ENCODE measurements at regions of chr10 and their contacts with region 1.

Region 1: DNA sequence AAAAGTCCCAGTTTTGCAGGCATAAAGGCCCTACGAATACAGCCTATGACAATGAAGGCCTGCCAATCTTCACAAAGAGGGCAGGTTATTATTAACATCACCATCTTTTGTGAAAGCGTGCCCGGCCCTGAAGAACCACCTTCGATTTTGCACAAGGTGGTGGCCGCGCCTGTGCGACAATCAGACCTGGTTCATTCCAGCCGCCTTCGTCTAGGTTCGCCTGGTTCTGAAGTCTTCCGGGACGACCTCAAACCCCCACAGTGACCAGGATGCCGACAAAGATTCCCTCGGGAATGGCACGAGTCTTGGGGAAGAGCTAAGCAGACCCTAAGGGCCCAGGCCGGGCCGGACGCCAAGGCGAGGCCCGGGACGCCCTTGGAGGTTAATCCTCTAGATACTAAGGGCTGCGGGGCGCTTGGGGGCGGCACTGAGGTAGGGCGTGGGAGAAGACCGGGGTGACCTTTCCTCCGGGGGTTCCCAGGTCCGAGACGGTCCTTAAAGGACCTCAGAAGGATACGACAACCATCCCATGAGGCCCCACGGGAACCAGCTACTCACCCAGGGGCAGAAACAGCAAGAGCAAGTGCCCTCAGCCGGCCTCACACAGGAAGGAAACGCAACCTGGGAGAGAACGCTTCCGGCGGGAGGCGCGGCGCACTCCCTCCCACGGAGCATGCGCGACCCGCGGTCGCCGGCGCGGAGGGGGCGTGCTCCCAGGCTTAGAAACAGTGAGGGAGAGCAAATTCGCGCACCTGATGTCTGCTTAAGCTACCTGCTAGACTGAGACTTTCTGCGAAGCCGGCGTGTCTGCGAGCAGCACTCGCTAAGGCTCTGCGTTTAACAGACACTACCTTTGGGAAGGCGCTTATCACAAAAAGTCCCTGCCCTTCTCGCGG is at the start of gene ATAD1:
- DNase-seq: peak; percentile 93
- H3K4me3 Mint-ChIP-seq: peak within 1 kb of the TSS; percentile 97
- H3K27ac Mint-ChIP-seq: peak within 1 kb of the TSS; percentile 98
- H3K4me1 Mint-ChIP-seq: peaks cover 29% of the 10 kb centered on the region
- H3K27me3 Mint-ChIP-seq: no peaks in the 10 kb centered on the region
- total RNA-seq, gene ATAD1: 39.4 to 42.8 TPM

Region 2: DNA sequence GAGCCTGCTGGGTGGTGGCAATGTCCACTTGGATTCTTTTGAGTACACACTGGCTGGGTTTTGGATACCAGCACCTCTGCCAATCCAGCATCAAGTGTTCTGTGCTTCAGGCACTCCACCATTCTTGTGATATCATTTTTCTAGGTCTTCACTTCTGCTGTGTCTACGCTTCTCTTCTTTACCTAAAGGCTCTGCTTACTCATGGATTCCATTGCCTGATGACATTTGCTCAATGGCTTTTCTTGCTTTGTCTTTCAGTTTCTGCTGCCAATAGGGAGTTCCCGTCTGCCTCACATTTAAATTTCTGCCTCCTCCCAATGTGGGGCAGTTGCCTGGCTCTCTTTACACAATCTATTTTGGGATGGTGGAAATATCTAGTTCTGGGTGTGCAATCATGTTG is 170.9 kb before region 1 on chr10:
- CTCF ChIA-PET with region 1: no interaction called
- POLR2A ChIA-PET with region 1: no interaction called
- intact Hi-C with region 1: no loop called
- DNase-seq: no peak
- H3K4me3 Mint-ChIP-seq: no peak overlapping the region
- H3K27ac Mint-ChIP-seq: no peak overlapping the region
- H3K4me1 Mint-ChIP-seq: peaks cover 15% of the 10 kb centered on the region
- H3K27me3 Mint-ChIP-seq: no peaks in the 10 kb centered on the region

Region 3: GRCh38 chr10:87761892-87762291 is 56.0 kb before region 1 on chr10:
- CTCF ChIA-PET with region 1: no interaction called
- POLR2A ChIA-PET with region 1: no interaction called
- intact Hi-C with region 1: loop called (anchors 1 kb)
- DNase-seq: peak; percentile 75
- H3K4me3 Mint-ChIP-seq: no peak overlapping the region
- H3K27ac Mint-ChIP-seq: peak overlapping the region; percentile 72
- H3K4me1 Mint-ChIP-seq: peaks cover 31% of the 10 kb centered on the region
- H3K27me3 Mint-ChIP-seq: no peaks in the 10 kb centered on the region

Region 4: GRCh38 chr10:88064608-88065382 is 246.9 kb after region 1 on chr10:
- CTCF ChIA-PET with region 1: no interaction called
- POLR2A ChIA-PET with region 1: no interaction called
- intact Hi-C with region 1: loop called (anchors 5 kb)
- DNase-seq: peak; percentile 51
- H3K4me3 Mint-ChIP-seq: no peak overlapping the region
- H3K27ac Mint-ChIP-seq: peak overlapping the region; percentile 9
- H3K4me1 Mint-ChIP-seq: peaks cover 49% of the 10 kb centered on the region
- H3K27me3 Mint-ChIP-seq: peaks cover 14% of the 10 kb centered on the region

Region 5: DNA sequence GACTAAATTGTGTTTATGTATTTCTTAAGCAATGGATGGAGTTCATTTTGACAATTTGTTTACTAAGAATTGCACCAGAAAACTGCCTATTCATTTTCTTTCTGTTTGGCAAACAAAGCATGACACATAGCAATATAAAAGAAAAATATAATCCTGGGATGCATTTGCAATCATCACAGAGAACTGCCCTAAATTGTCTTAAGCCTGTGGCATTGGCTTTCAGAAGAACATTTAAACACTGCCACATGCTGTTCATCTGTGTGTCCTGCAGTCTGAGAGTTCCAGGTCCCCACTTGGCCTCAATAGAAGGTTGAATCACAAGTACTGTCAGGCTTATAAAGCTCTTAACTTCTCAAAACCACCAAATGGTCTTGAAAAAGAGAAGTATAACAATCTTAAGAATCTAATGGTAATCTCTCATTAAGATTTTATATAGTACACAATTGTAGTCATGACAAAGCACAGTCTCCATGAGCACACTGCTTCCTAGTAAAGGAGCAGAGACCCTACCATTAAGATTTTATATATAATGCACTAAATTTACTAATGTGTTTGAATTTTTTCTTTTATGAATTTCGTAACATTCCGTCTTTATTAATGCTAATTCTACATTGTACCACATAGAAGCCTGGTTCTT is 735.4 kb after region 1 on chr10:
- CTCF ChIA-PET with region 1: interaction called, 10 read pairs
- POLR2A ChIA-PET with region 1: no interaction called
- intact Hi-C with region 1: no loop called
- DNase-seq: peak; percentile 49
- H3K4me3 Mint-ChIP-seq: no peak overlapping the region
- H3K27ac Mint-ChIP-seq: no peak overlapping the region
- H3K4me1 Mint-ChIP-seq: no peaks in the 10 kb centered on the region
- H3K27me3 Mint-ChIP-seq: no peaks in the 10 kb centered on the region

Measured in activated CD4-positive, alpha-beta memory T cell treated with anti-CD3 and anti-CD28 coated beads for 36 hours (primary cell).